Heart left ventricle (tissue), 16 donors: ENCODE measurements at regions of chr22 and their contacts with region 1.

Region 1: GRCh38 chr22:28188178-28188879 is 269.3 kb upstream of the PITPNB start:
- DNase-seq: no peak
- ATAC-seq: no peak
- H3K4me3 ChIP-seq: no peak overlapping the region
- H3K27ac ChIP-seq: no peak overlapping the region
- H3K4me1 ChIP-seq: peaks cover 0 to 16% (median 4%) of the 10 kb centered on the region in 12 donors
- H3K27me3 ChIP-seq: no peaks in the 10 kb centered on the region
- CTCF ChIP-seq: no peak
- POLR2A ChIP-seq: no peak

Region 2: DNA sequence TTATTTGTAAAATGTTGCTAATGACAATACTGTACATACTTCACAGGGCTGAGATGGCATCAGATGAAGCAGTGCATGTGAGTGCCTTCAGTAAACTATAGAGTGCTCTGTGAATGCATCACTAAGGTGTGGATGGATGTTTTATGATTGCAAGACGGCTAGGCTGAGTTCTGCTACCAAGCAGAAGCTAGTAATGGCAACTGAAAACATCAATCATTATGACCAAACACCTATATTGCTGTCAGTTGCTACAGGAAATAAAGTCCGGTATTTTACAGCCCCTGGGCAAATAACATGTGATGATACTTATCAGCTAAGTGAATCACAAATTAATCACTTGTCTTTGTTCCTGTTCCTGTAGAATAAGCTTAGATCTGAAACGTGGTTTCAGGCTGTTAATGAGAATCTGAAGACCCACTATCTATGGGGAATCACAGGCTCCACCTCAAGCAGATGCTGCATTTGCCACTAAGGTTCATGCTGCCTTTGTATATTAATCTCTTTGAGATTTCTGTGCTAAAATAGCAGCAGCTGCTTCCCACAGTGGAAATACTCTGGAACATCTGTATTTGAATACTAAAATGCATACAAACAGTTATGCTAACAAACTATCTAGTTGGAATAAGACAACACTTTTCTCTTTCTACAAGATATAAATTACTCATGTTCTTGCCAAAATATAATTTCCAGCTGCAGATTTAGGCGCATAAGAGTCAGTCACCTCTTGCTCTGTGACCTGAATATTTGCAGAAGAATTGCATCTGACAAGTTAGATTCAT is 15.2 kb before region 1 on chr22:
- intact Hi-C with region 1: no loop called
- DNase-seq: no peak
- ATAC-seq: no peak
- H3K4me3 ChIP-seq: no peak overlapping the region
- H3K27ac ChIP-seq: no peak overlapping the region
- H3K4me1 ChIP-seq: peaks cover 0 to 28% (median 10%) of the 10 kb centered on the region in 12 donors
- H3K27me3 ChIP-seq: no peaks in the 10 kb centered on the region
- CTCF ChIP-seq: no peak
- POLR2A ChIP-seq: no peak

Region 3: GRCh38 chr22:28222976-28223745 is 34.8 kb after region 1 on chr22:
- intact Hi-C with region 1: loop called in 1 of 10 experiments (anchors 5 kb)
- DNase-seq: no peak
- ATAC-seq: peak in 2 of 4 donors; percentile 41 to 58
- H3K4me3 ChIP-seq: no peak overlapping the region
- H3K27ac ChIP-seq: peak overlapping the region in 1 of 12 donors; percentile 3
- H3K4me1 ChIP-seq: peaks cover 0 to 33% (median 12%) of the 10 kb centered on the region in 12 donors
- H3K27me3 ChIP-seq: no peaks in the 10 kb centered on the region
- CTCF ChIP-seq: no peak
- POLR2A ChIP-seq: no peak